ENCODE measurements at regions of chr3 and their contacts with region 1.

Region 1: GRCh38 chr3:149384911-149385321 is 7.5 kb upstream of the TM4SF1 start:
- DNase-seq: no peak
- ATAC-seq: no peak
- H3K4me3 ChIP-seq: no peak overlapping the region
- H3K27ac ChIP-seq: peak overlapping the region in 1 of 2 donors; percentile 64
- H3K4me1 ChIP-seq: peaks cover 0 to 5% of the 10 kb centered on the region in 2 donors
- H3K27me3 ChIP-seq: no peaks in the 10 kb centered on the region

Region 2: DNA sequence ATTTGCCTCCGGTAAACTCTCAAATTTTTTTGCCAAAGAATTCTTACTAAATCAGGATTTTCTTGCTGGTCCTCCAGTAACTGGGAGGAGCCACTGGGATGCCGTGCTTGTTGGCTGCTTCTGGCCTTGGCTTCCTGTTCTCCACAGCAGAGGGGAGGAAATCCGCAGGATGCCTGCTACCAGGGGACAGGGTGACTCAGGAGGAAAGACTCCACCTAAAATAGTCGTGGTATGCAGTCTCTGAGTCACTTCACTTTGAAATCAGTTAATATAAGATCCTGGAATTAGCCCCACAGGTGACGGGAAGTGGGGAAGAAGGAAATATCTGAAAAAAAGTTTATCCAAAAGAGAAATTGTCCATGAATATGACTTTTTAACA is 45.0 kb before region 1 on chr3:
- intact Hi-C with region 1: no loop called
- DNase-seq: peak; percentile 92 to 94
- ATAC-seq: peak; percentile 95
- H3K4me3 ChIP-seq: no peak overlapping the region
- H3K27ac ChIP-seq: peak overlapping the region; percentile 80 to 95
- H3K4me1 ChIP-seq: peaks cover 2 to 6% of the 10 kb centered on the region in 2 donors
- H3K27me3 ChIP-seq: no peaks in the 10 kb centered on the region

Region 3: GRCh38 chr3:149352556-149352955 is 32.4 kb before region 1 on chr3:
- intact Hi-C with region 1: loop called in 1 of 2 experiments (anchors 5 kb)
- DNase-seq: peak; percentile 66 to 85
- ATAC-seq: peak; percentile 88
- H3K4me3 ChIP-seq: no peak overlapping the region
- H3K27ac ChIP-seq: no peak overlapping the region
- H3K4me1 ChIP-seq: no peaks in the 10 kb centered on the region
- H3K27me3 ChIP-seq: peaks cover 0 to 2% of the 10 kb centered on the region in 2 donors

Region 4: GRCh38 chr3:149527531-149528339 is 142.8 kb after region 1 on chr3:
- intact Hi-C with region 1: no loop called
- DNase-seq: no peak
- ATAC-seq: peak; percentile 50
- H3K4me3 ChIP-seq: no peak overlapping the region
- H3K27ac ChIP-seq: no peak overlapping the region
- H3K4me1 ChIP-seq: peaks cover 6 to 16% of the 10 kb centered on the region in 2 donors
- H3K27me3 ChIP-seq: no peaks in the 10 kb centered on the region

Region 5: DNA sequence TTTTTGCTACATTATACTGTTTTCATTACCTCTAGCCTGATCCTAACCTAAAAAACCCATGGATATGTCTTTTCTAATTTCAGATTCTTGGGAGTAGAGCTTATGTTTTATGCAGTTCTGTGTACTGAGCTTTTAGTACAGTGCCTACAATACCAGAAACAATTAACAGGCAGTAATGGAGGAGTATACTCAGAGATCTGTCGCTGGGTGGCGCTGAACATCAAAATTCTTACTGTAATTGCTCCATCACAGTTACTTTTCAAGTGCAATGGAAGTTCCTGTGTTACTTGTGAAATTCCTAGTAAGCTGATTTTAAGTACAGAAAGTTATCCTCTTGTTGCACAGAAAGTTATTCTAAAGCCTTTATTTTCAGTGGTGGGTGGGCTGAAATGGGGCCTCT is 495.0 kb after region 1 on chr3:
- intact Hi-C with region 1: no loop called
- DNase-seq: peak; percentile 77 to 84
- ATAC-seq: peak; percentile 70
- H3K4me3 ChIP-seq: no peak overlapping the region
- H3K27ac ChIP-seq: no peak overlapping the region
- H3K4me1 ChIP-seq: no peaks in the 10 kb centered on the region
- H3K27me3 ChIP-seq: no peaks in the 10 kb centered on the region

Measured in aorta (tissue), 5 donors.